ENCODE measurements at regions of chr12 and their contacts with region 1.

Region 1: DNA sequence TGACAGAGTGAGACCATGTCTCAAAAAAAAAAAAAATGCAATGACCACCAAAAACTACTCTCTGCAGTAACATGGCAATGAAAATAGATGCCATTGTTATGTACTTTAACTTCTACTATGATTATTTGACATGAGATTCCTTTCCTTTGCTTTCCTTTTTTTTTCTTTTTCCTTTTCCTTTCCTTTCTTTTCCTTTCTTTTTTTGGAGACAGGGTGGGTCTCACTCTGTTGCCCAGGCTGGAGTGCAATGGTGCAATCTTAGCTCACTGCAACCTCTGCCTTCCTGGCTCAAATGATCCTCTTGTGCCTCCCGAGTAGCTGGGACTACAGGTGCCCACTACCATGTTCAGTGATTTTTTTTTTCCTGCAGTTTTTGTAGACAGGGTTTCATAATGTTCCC is 24.9 kb upstream of the ETFBKMT start:
- DNase-seq: no peak
- H3K4me3 ChIP-seq: no peak overlapping the region
- H3K4me3 Mint-ChIP-seq: no peak overlapping the region
- H3K27ac ChIP-seq: no peak overlapping the region
- H3K27ac Mint-ChIP-seq: peak overlapping the region in 1 of 8 donors; percentile 40
- H3K4me1 ChIP-seq: no peaks in the 10 kb centered on the region
- H3K4me1 Mint-ChIP-seq: peaks cover 4 to 8% (median 7%) of the 10 kb centered on the region in 3 donors
- H3K27me3 ChIP-seq: no peaks in the 10 kb centered on the region
- H3K27me3 Mint-ChIP-seq: peaks cover 6 to 7% of the 10 kb centered on the region in 2 donors

Region 2: DNA sequence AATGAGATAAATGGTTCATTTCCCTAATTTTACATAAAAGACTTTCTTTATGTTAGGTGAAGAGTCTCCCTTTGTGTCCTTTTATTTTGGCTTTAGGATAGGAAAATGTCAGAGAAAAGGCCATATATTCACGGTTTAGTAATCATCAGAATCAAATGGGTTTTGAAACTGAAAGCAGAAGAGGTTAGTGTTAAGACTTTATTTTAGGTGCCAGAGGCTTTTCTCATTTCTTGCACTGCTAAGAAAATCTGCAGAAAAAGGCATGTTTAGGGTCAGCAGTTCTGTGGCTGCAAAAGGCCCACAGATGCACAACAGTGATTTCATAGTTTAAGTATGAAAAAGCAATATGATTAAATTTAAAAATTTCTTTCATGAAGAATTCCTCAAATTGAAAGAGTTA is 228.3 kb before region 1 on chr12:
- CTCF ChIA-PET with region 1: interaction called, 13 read pairs
- POLR2A ChIA-PET with region 1: no interaction called
- DNase-seq: no peak
- H3K4me3 ChIP-seq: no peak overlapping the region
- H3K4me3 Mint-ChIP-seq: no peak overlapping the region
- H3K27ac ChIP-seq: no peak overlapping the region
- H3K27ac Mint-ChIP-seq: peak overlapping the region in 2 of 8 donors; percentile 46 to 52
- H3K4me1 ChIP-seq: no peaks in the 10 kb centered on the region
- H3K4me1 Mint-ChIP-seq: peaks cover 3 to 4% (median 4%) of the 10 kb centered on the region in 3 donors
- H3K27me3 ChIP-seq: no peaks in the 10 kb centered on the region
- H3K27me3 Mint-ChIP-seq: peaks cover 12 to 14% of the 10 kb centered on the region in 2 donors

Region 3: DNA sequence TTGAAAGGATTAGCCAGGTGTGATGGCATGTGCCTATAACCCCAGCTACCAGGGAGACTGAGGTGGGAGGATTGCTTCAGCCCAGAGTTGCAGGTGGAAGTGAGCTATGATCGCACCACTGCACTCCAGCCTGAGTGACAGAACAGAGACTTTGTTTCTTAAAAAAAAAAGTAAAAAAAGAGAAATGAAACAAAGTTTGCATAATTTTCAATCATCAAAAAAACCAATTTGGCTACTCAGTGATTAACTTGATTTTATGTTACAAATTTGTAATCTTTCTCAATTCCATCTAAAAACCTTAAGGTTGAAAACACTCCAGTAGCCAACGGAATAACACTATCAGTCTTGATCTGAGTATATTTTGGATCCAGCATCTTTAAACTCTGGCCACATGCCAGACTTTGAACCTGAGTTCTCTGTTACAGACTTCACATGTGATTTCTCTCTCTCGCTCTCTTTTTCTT is 31.0 kb before region 1 on chr12:
- CTCF ChIA-PET with region 1: no interaction called
- POLR2A ChIA-PET with region 1: no interaction called
- DNase-seq: no peak
- H3K4me3 ChIP-seq: no peak overlapping the region
- H3K4me3 Mint-ChIP-seq: no peak overlapping the region
- H3K27ac ChIP-seq: no peak overlapping the region
- H3K27ac Mint-ChIP-seq: no peak overlapping the region
- H3K4me1 ChIP-seq: no peaks in the 10 kb centered on the region
- H3K4me1 Mint-ChIP-seq: no peaks in the 10 kb centered on the region
- H3K27me3 ChIP-seq: no peaks in the 10 kb centered on the region
- H3K27me3 Mint-ChIP-seq: peaks cover 11 to 12% of the 10 kb centered on the region in 2 donors

Region 4: GRCh38 chr12:31705621-31706020 is 71.0 kb after region 1 on chr12:
- CTCF ChIA-PET with region 1: no interaction called
- POLR2A ChIA-PET with region 1: no interaction called
- DNase-seq: peak in 1 of 5 donors; percentile 22
- H3K4me3 ChIP-seq: no peak overlapping the region
- H3K4me3 Mint-ChIP-seq: no peak overlapping the region
- H3K27ac ChIP-seq: no peak overlapping the region
- H3K27ac Mint-ChIP-seq: peak overlapping the region in 3 of 8 donors; percentile 19 to 70 (median 27)
- H3K4me1 ChIP-seq: no peaks in the 10 kb centered on the region
- H3K4me1 Mint-ChIP-seq: peaks cover 6 to 18% (median 13%) of the 10 kb centered on the region in 3 donors
- H3K27me3 ChIP-seq: no peaks in the 10 kb centered on the region
- H3K27me3 Mint-ChIP-seq: no peaks in the 10 kb centered on the region

Measured in CD8-positive, alpha-beta memory T cell (primary cell).